Sigmoid colon (tissue), 7 donors: ENCODE measurements at regions of chr18 and their contacts with region 1.

Region 1: GRCh38 chr18:51197661-51198424 is at the start of gene MEX3C:
- DNase-seq: peak; percentile 100
- H3K4me3 ChIP-seq: peak within 1 kb of the TSS; percentile 71 to 97 (median 83)
- H3K27ac ChIP-seq: peak within 1 kb of the TSS; percentile 98 to 99 (median 99)
- H3K4me1 ChIP-seq: peaks cover 0 to 33% (median 26%) of the 10 kb centered on the region in 4 donors
- H3K27me3 ChIP-seq: no peaks in the 10 kb centered on the region
- CTCF ChIP-seq: no peak
- EP300 ChIP-seq: no peak
- POLR2A ChIP-seq: peak in 1 of 2 donors; percentile 44
- total RNA-seq, gene MEX3C: 18.4 to 20.7 (median 20.2) TPM

Region 2: GRCh38 chr18:50281295-50281971 is 916.4 kb before region 1 on chr18 and contains the start of gene MBD1:
- intact Hi-C with region 1: loop called (anchors 5 kb)
- DNase-seq: peak; percentile 99
- H3K4me3 ChIP-seq: peak within 1 kb of the TSS; percentile 74 to 99 (median 92)
- H3K27ac ChIP-seq: peak within 1 kb of the TSS; percentile 93 to 96 (median 94)
- H3K4me1 ChIP-seq: peaks cover 0 to 34% (median 29%) of the 10 kb centered on the region in 4 donors
- H3K27me3 ChIP-seq: no peaks in the 10 kb centered on the region
- CTCF ChIP-seq: peak in 2 of 4 experiments; percentile 12 to 20
- EP300 ChIP-seq: no peak
- POLR2A ChIP-seq: peak; percentile 91
- total RNA-seq, gene MBD1: 58.9 to 93.6 (median 75.5) TPM

Region 3: GRCh38 chr18:50527636-50528307 is 670.1 kb before region 1 on chr18:
- intact Hi-C with region 1: no loop called
- DNase-seq: no peak
- H3K4me3 ChIP-seq: no peak overlapping the region
- H3K27ac ChIP-seq: no peak overlapping the region
- H3K4me1 ChIP-seq: no peaks in the 10 kb centered on the region
- H3K27me3 ChIP-seq: no peaks in the 10 kb centered on the region
- CTCF ChIP-seq: no peak
- EP300 ChIP-seq: no peak
- POLR2A ChIP-seq: no peak

Region 4: GRCh38 chr18:50819728-50820378 is 378.0 kb before region 1 on chr18 and contains the start of gene MRO:
- intact Hi-C with region 1: loop called (anchors 5 kb)
- DNase-seq: peak; percentile 93
- H3K4me3 ChIP-seq: peak within 1 kb of the TSS; percentile 15 to 42 (median 36)
- H3K27ac ChIP-seq: peak within 1 kb of the TSS; percentile 8 to 38 (median 26)
- H3K4me1 ChIP-seq: peaks cover 0 to 31% (median 17%) of the 10 kb centered on the region in 4 donors
- H3K27me3 ChIP-seq: no peaks in the 10 kb centered on the region
- CTCF ChIP-seq: peak; percentile 79 to 93 (median 84)
- EP300 ChIP-seq: peak in 2 of 4 donors; percentile 35 to 78
- POLR2A ChIP-seq: no peak
- total RNA-seq, gene MRO: under 0.01 to 2.5 (median 0.45) TPM

Region 5: DNA sequence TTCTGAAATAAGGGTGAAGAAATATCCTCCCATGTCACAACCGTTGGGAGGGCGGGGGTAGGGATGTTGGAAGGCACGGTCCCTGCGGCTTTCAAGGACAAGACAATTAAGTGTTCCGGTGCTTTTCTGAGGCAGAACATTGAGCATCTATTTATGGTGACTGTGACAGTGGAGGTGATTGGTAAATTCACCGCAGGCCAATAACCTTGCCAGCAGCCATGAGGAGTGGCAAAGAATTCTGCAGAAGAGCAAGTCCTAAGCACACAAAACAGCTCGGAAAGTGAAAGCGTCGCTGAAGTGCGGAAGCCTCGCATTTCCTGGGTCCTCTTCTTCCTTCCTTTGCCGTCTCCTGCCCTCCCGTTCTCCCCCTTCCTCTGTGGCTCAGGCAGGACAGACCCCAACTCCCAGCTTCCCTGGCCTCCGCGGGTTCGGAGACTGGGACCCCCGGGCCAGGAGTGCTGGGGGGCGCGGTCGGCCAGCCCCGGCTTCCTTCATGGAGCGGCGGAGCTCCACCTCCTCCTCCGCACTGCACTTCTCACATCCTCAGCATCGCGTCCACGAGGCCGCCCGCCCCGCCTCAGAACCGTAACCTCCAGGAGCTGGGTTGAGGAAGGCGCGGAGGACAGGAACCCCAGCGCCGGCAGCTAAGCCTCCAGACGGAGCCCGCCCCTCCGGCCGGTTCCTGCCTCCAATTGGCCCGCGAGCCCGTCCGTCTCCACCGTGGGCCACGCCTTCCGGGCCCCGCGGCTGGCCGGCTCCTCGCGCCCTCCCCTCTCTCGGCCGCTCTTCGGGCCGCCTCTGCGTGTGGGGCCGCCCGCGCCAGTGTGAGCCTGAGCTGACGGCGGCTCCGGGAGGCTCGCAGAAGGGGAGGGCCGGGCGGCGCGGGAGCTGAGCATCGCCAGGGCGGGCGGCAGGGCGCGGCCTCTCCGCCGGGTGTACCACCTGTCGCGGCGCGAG is 319.2 kb before region 1 on chr18 and contains the start of gene ME2:
- intact Hi-C with region 1: loop called (anchors 5 kb)
- DNase-seq: peak; percentile 96
- H3K4me3 ChIP-seq: peak within 1 kb of the TSS; percentile 81 to 90 (median 83)
- H3K27ac ChIP-seq: peak within 1 kb of the TSS; percentile 95 to 98 (median 96)
- H3K4me1 ChIP-seq: peaks cover 0 to 20% (median 11%) of the 10 kb centered on the region in 4 donors
- H3K27me3 ChIP-seq: no peaks in the 10 kb centered on the region
- CTCF ChIP-seq: no peak
- EP300 ChIP-seq: no peak
- POLR2A ChIP-seq: peak; percentile 50 to 62
- total RNA-seq, gene ME2: 49.6 to 66.2 (median 62.6) TPM

Region 6: DNA sequence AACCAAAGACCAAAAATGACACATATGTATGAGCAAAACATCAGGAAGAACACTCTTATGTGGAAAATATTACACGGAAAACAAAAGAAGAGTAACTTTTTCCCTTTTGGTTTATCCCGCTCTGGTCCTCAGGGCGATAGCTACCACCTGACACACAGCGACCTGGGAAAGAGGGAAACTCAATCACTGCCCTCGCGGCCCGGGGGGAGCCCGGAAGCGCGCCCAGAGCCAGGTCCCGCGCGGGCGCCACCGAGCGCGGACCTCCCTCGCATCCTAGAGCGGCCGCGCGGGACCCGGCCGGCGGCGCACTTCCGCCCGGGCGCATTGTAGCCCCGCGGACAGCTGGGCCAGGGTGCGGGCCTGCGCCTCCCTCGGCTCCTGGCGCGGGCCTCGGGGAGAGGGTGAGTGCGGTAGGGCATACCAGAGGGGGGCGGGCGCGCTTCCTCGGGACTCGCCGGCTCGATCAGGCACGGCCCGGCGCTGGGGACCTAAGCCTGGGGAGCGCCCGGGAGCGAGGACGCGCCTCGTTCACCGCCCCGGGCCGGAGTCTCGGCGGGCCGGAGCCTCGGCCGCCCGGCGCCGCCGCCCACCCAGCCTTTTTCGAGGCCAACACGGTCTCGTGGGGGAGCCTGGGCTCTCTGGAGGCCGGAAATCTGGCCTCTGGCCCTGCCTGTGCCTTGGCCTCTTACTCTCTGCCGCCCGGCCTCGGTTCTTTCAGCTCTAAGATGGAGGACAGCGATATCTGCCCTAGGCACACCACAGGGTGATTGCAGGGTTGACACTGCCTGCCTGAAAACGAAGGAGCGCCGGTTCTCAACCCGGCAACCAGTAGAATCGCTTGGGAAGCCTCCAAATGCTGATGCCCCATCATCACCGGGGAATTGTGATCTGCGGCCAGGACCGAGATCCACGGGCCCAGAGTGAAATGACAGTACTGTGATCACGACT is 229.9 kb before region 1 on chr18 and contains the start of gene ELAC1:
- intact Hi-C with region 1: loop called (anchors 2 kb)
- DNase-seq: peak; percentile 89
- H3K4me3 ChIP-seq: peak within 1 kb of the TSS; percentile 73 to 99 (median 84)
- H3K27ac ChIP-seq: peak within 1 kb of the TSS; percentile 97 to 100 (median 99)
- H3K4me1 ChIP-seq: peaks cover 0 to 24% (median 17%) of the 10 kb centered on the region in 4 donors
- H3K27me3 ChIP-seq: no peaks in the 10 kb centered on the region
- CTCF ChIP-seq: no peak
- EP300 ChIP-seq: no peak
- POLR2A ChIP-seq: peak in 1 of 2 donors; percentile 57
- total RNA-seq, gene ELAC1: 3.9 to 5.8 (median 5.5) TPM

Region 7: GRCh38 chr18:51029694-51030536 is 167.9 kb before region 1 on chr18 and contains the start of gene SMAD4:
- intact Hi-C with region 1: loop called (anchors 2 kb)
- DNase-seq: peak; percentile 98
- H3K4me3 ChIP-seq: peak within 1 kb of the TSS; percentile 42 to 86 (median 74)
- H3K27ac ChIP-seq: peak within 1 kb of the TSS; percentile 95 to 99 (median 98)
- H3K4me1 ChIP-seq: peaks cover 0 to 54% (median 49%) of the 10 kb centered on the region in 4 donors
- H3K27me3 ChIP-seq: no peaks in the 10 kb centered on the region
- CTCF ChIP-seq: peak in 1 of 4 experiments; percentile 18
- EP300 ChIP-seq: peak in 1 of 4 donors; percentile 45
- POLR2A ChIP-seq: peak; percentile 92 to 93
- total RNA-seq, gene SMAD4: 106 to 143 (median 122) TPM

Region 8: DNA sequence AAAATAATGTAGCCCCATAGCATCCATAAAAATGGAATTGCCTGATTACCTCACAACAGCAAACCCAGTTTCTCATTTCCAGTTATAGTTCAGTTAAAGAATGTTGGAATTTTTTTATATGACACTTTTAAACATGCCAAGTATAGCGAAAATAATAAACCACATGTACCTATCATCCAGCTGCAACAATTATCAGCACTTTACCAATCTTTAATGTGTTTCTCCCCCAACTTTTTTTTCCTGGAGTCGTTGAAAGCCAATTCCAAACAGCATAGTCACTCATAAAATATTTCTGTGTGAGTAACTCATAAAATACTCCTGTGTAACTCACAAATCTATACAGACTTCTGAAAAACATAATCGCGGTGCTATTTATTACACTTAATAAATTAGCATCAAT is 129.7 kb before region 1 on chr18:
- intact Hi-C with region 1: loop called (anchors 10 kb)
- DNase-seq: no peak
- H3K4me3 ChIP-seq: no peak overlapping the region
- H3K27ac ChIP-seq: peak overlapping the region in 3 of 4 donors; percentile 5 to 77 (median 76)
- H3K4me1 ChIP-seq: peaks cover 0 to 66% (median 35%) of the 10 kb centered on the region in 4 donors
- H3K27me3 ChIP-seq: no peaks in the 10 kb centered on the region
- CTCF ChIP-seq: no peak
- EP300 ChIP-seq: peak in 2 of 4 donors; percentile 37 to 53
- POLR2A ChIP-seq: no peak

Region 9: DNA sequence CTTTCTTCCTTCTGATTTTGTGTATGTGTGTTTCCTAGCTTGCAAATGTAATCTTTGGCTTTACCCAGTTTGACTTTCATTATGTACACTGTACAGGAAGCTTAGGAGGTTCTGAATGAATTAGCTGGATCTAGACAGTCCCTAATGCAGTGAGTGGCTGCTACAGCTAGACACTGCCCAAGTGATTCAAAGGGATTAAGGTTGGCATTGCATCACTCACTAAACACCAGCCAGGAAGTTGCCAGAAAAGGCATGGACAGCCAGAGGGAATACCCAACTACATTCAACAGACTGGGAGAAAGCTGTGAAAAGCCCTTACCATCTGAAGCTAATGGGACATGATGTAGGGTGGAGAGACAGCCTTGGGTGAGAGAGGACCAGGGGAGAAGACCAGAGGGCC is 315.7 kb after region 1 on chr18:
- intact Hi-C with region 1: no loop called
- DNase-seq: no peak
- H3K4me3 ChIP-seq: no peak overlapping the region
- H3K27ac ChIP-seq: no peak overlapping the region
- H3K4me1 ChIP-seq: no peaks in the 10 kb centered on the region
- H3K27me3 ChIP-seq: no peaks in the 10 kb centered on the region
- CTCF ChIP-seq: no peak
- EP300 ChIP-seq: no peak
- POLR2A ChIP-seq: no peak